Activated CD4-positive, alpha-beta memory T cell treated with anti-CD3 and anti-CD28 coated beads for 36 hours (primary cell): ENCODE measurements at regions of chr9 and their contacts with region 1.

Region 1: GRCh38 chr9:6412487-6413364 is at the start of gene UHRF2:
- DNase-seq: peak; percentile 100
- H3K4me3 Mint-ChIP-seq: peak within 1 kb of the TSS; percentile 80
- H3K27ac Mint-ChIP-seq: peak within 1 kb of the TSS; percentile 94
- H3K4me1 Mint-ChIP-seq: peaks cover 26% of the 10 kb centered on the region
- H3K27me3 Mint-ChIP-seq: no peaks in the 10 kb centered on the region
- total RNA-seq, gene UHRF2: 59.5 to 62.9 TPM

Region 2: GRCh38 chr9:5450359-5451091 is 962.2 kb before region 1 on chr9 and contains the start of gene CD274:
- CTCF ChIA-PET with region 1: no interaction called
- POLR2A ChIA-PET with region 1: no interaction called
- intact Hi-C with region 1: loop called (anchors 10 kb)
- DNase-seq: peak; percentile 92
- H3K4me3 Mint-ChIP-seq: peak within 1 kb of the TSS; percentile 86
- H3K27ac Mint-ChIP-seq: peak within 1 kb of the TSS; percentile 90
- H3K4me1 Mint-ChIP-seq: peaks cover 59% of the 10 kb centered on the region
- H3K27me3 Mint-ChIP-seq: no peaks in the 10 kb centered on the region
- total RNA-seq, gene CD274: 28.3 to 32.4 TPM

Region 3: DNA sequence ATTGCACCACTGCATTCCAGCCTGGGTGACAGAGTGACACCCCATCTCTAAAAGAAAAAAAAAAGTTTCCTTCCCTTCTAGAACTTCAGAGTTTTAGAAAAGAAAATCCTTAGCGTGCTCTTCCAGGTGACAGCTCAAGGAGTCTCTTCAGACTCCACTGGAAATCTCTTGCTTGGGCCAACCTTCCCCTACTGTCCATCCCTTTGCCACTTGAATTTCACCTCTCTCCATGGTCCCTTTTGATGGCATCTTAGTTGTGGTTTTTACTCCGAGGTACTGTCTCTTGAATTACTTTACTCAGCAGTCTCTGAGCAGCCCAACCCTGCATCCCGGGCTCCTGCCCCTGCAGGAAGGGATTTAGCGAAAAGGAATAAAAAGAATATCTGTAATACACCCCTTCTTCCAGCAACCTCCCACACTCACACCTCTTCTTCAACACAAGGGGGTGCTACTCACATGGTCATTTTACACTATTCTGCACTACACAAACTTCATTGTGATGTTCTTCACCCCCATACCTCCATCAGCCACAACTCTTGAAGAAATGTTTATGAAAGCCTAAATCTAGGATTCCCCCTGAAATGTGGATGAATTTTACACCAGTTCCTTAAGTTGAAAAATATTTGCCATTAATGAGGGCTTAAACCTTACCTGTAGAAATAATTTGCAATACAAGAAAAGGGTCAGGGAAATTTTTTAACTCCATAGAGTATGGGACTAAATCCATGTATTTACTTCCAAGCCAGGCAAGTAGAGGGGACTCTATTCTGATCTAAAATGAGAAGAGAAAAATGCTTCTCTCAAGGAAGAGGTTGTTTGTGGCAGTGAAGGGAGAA is 58.7 kb before region 1 on chr9:
- CTCF ChIA-PET with region 1: interaction called, 8 read pairs
- POLR2A ChIA-PET with region 1: no interaction called
- intact Hi-C with region 1: loop called (anchors 1 kb)
- DNase-seq: peak; percentile 23
- H3K4me3 Mint-ChIP-seq: no peak overlapping the region
- H3K27ac Mint-ChIP-seq: no peak overlapping the region
- H3K4me1 Mint-ChIP-seq: peaks cover 16% of the 10 kb centered on the region
- H3K27me3 Mint-ChIP-seq: peaks cover 4% of the 10 kb centered on the region

Region 4: GRCh38 chr9:6467006-6467625 is 54.4 kb after region 1 on chr9:
- CTCF ChIA-PET with region 1: interaction called, 3 read pairs
- POLR2A ChIA-PET with region 1: interaction called, 5 read pairs
- intact Hi-C with region 1: loop called (anchors 5 kb)
- DNase-seq: no peak
- H3K4me3 Mint-ChIP-seq: no peak overlapping the region
- H3K27ac Mint-ChIP-seq: peak overlapping the region; percentile 33
- H3K4me1 Mint-ChIP-seq: peaks cover 27% of the 10 kb centered on the region
- H3K27me3 Mint-ChIP-seq: no peaks in the 10 kb centered on the region

Region 5: DNA sequence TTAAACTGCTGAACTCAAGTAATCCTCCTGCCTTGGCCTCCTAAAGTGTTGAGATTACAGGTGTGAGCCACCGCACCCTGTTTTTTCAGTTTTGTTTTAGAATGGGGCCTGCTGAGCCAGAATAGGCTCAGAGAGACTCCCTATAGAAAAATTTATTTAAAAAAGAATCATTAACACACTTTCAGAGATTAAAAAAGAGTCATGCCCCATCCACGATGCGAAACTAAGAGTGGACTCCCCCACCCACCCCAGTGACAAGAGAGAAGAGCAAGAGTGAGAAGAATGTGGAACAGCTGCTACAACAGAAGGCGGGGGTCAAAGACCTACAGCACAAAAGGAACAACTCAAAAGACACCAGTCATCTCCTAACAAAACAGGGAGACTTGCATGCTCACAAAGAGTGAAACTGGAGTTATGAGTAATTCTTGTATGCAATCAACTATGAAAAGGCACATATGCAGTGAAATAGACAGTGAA is 185.6 kb after region 1 on chr9:
- CTCF ChIA-PET with region 1: no interaction called
- POLR2A ChIA-PET with region 1: interaction called, 3 read pairs
- intact Hi-C with region 1: loop called (anchors 1 kb)
- DNase-seq: peak; percentile 74
- H3K4me3 Mint-ChIP-seq: peak overlapping the region; percentile 47
- H3K27ac Mint-ChIP-seq: peak overlapping the region; percentile 87
- H3K4me1 Mint-ChIP-seq: peaks cover 8% of the 10 kb centered on the region
- H3K27me3 Mint-ChIP-seq: peaks cover 1% of the 10 kb centered on the region